Activated T-helper 1 cell treated with anti-CD3 and anti-CD28 coated beads, Interleukin-12 subunit alpha, Interleukin-12 subunit beta, Interleukin-2, Interleukin-4 antibody, amounts not matched to agents 30 ng/mL and 10 ng/mL and 1 ng/mL, durations not matched to agents 14 hours and 24 hours and 36 hours (primary cell): ENCODE measurements at regions of chr3 and their contacts with region 1.

Region 1: DNA sequence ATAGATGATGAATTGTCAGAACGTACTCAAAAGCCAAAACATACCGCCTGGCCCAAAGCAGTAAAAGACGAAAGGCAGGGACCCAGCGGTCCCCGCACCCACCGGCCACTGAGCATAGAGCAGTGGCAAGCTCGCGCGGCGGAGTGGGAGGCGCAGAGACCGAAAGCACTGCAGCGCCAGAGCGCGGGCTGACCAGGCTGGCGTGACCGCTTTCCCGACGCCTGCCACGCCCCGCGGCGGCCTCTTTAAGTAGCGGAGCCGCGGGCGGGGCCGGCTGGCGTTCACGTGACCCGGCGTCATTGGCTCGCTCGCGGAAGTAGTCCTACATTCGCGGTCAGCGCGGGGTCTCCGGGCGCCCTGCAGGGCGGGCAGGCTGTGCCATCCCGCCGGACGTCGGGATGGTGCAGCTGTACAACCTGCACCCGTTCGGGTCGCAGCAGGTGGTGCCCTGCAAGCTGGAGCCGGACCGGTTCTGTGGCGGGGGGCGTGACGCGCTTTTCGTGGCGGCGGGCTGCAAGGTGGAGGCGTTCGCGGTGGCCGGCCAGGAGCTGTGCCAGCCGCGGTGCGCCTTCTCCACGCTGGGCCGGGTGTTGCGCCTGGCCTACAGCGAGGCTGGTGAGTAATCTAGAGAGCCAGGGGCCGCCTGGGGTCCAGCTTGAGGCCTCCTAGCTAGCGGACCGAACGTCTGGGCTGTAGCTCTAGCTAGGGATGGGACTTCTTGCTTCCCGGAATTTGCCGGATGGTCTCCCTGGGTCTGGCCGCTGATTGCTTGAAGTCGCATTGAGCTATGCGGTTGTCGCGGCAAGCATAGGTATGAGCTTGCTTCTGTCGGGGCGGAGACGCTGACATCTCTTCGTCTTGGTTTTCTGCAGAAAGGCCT is at the start of gene HPS3:
- DNase-seq: peak; percentile 84
- H3K4me3 Mint-ChIP-seq: peak within 1 kb of the TSS; percentile 92
- H3K27ac Mint-ChIP-seq: peak within 1 kb of the TSS; percentile 88
- H3K4me1 Mint-ChIP-seq: peaks cover 39% of the 10 kb centered on the region
- H3K27me3 Mint-ChIP-seq: peaks cover 33% of the 10 kb centered on the region
- total RNA-seq, gene HPS3: 15.8 and 17.3 TPM in 2 replicates

Region 2: DNA sequence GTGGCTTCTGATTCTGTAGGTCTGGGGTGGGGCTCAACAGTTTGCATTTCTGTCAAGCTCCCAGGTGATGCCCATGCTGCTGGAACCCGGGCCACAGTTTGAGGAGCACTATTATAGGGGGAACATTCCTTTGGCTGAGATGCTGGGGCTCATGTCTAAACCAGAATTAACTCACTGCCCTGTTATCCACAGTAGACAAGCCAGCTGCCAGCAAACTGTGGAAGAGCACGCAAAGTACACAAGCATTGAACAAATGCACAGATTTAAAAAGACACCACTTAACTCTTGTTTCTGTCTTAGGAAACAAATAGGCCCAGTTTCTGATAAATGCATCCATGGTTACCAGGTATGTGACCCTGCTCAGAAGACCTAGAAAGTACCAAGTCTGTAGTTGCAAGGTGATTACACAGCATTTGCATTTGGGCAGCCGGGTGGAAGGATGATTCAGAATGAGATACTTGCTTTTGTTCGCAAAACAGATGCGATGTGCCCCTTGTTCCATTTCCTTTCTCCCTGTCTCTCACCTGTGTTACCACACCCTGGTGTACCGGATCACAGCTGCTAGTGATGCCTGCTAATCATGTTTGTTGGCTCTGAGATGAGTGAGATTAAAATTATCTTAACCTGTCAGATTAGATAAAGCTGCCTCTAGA is 125.8 kb before region 1 on chr3:
- intact Hi-C with region 1: no loop called
- DNase-seq: no peak
- H3K4me3 Mint-ChIP-seq: no peak overlapping the region
- H3K27ac Mint-ChIP-seq: peak overlapping the region; percentile 40
- H3K4me1 Mint-ChIP-seq: peaks cover 41% of the 10 kb centered on the region
- H3K27me3 Mint-ChIP-seq: no peaks in the 10 kb centered on the region

Region 3: DNA sequence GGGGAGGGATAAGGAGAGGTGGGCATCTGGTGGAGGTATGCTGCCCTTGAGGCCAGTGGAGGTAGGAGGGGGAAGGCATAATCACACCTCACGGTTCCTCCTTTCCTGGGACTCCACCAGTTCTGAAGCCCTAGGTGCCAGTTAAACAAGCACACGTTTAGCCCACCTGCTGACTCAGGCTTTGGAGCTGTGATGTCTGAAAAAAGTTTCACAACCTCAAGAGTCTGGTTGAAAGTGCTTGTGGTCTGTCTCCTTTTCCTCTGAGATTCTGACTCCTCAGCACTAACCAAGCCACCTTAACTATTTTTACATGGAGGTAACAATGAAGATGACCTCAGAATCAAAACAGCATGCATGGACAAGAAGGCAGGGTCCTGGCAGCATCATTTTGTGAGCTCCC is 22.9 kb after region 1 on chr3:
- intact Hi-C with region 1: loop called (anchors 1 kb)
- DNase-seq: peak; percentile 2
- H3K4me3 Mint-ChIP-seq: no peak overlapping the region
- H3K27ac Mint-ChIP-seq: no peak overlapping the region
- H3K4me1 Mint-ChIP-seq: peaks cover 19% of the 10 kb centered on the region
- H3K27me3 Mint-ChIP-seq: no peaks in the 10 kb centered on the region

Region 4: GRCh38 chr3:149245738-149246451 is 116.3 kb after region 1 on chr3:
- intact Hi-C with region 1: loop called (anchors 1 kb)
- DNase-seq: no peak
- H3K4me3 Mint-ChIP-seq: peak overlapping the region; percentile 16
- H3K27ac Mint-ChIP-seq: peak overlapping the region; percentile 51
- H3K4me1 Mint-ChIP-seq: peaks cover 37% of the 10 kb centered on the region
- H3K27me3 Mint-ChIP-seq: peaks cover 4% of the 10 kb centered on the region

Region 5: GRCh38 chr3:149523512-149524299 is 394.1 kb after region 1 on chr3:
- intact Hi-C with region 1: no loop called
- DNase-seq: no peak
- H3K4me3 Mint-ChIP-seq: no peak overlapping the region
- H3K27ac Mint-ChIP-seq: no peak overlapping the region
- H3K4me1 Mint-ChIP-seq: no peaks in the 10 kb centered on the region
- H3K27me3 Mint-ChIP-seq: peaks cover 8% of the 10 kb centered on the region